ENCODE measurements at regions of chr10 and their contacts with region 1.

Region 1: GRCh38 chr10:123559066-123559822 is 106.9 kb upstream of the GPR26 start:
- DNase-seq: peak; percentile 65
- ATAC-seq: peak; percentile 81
- H3K4me3 ChIP-seq: no peak overlapping the region
- H3K27ac ChIP-seq: no peak overlapping the region
- H3K4me1 ChIP-seq: peaks cover 1% of the 10 kb centered on the region; the same call in 1 of the 2 replicates
- H3K27me3 ChIP-seq: peaks cover 5% of the 10 kb centered on the region; the same call in 1 of the 2 replicates
- CTCF ChIP-seq: peak; percentile 90

Region 2: GRCh38 chr10:123132576-123133477 is 426.4 kb before region 1 on chr10:
- CTCF ChIA-PET with region 1: no interaction called
- POLR2A ChIA-PET with region 1: no interaction called
- intact Hi-C with region 1: loop called (anchors 1 kb)
- DNase-seq: peak; percentile 84
- ATAC-seq: peak; percentile 65
- H3K4me3 ChIP-seq: peak overlapping the region; percentile 47; the same call in 1 of the 2 replicates
- H3K27ac ChIP-seq: no peak overlapping the region
- H3K4me1 ChIP-seq: peaks cover 23% of the 10 kb centered on the region
- H3K27me3 ChIP-seq: peaks cover 34% of the 10 kb centered on the region
- CTCF ChIP-seq: peak; percentile 77

Region 3: DNA sequence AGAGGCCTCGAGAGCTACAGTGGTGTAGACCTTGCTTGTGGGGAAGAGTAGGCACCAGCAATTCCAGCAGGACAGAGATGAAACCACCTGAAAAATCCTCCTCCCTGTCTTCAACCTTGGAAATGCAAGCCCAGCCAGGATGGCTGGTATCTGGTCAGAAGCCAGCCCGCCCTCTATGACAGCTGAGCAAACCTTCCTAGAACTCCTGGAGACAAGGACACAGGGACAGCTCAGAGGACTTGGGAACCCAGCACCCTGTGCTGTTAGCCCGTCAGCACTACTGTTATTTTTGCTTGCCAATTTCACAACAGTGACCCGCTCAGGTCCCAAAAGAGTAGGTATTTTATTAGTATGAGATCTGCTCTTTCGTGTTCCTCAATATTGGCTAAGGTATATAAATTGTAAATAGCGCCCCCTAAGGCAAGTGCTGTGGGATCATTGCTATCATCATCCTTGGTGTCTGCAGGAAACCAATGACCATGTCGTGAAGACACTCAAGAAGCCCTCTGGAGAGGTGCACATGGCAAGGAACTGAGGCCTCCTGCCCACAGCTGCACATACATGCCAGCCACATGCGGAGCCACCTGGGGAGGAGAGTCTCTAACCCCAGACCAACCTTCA is 690.7 kb after region 1 on chr10:
- CTCF ChIA-PET with region 1: no interaction called
- POLR2A ChIA-PET with region 1: no interaction called
- intact Hi-C with region 1: no loop called
- DNase-seq: peak; percentile 5
- ATAC-seq: no peak
- H3K4me3 ChIP-seq: no peak overlapping the region
- H3K27ac ChIP-seq: no peak overlapping the region
- H3K4me1 ChIP-seq: no peaks in the 10 kb centered on the region
- H3K27me3 ChIP-seq: no peaks in the 10 kb centered on the region
- CTCF ChIP-seq: peak; percentile 37; the same call in 1 of the 2 replicates

Measured in PC-3 (cell line).